ENCODE measurements at regions of chr7 and their contacts with region 1.

Region 1: GRCh38 chr7:74012842-74013249 is 15.1 kb upstream of the ELN start:
- DNase-seq: no peak
- H3K4me3 ChIP-seq: no peak overlapping the region
- H3K27ac ChIP-seq: no peak overlapping the region
- H3K4me1 ChIP-seq: peaks cover 0 to 10% (median 3%) of the 10 kb centered on the region in 4 donors
- H3K27me3 ChIP-seq: no peaks in the 10 kb centered on the region
- CTCF ChIP-seq: no peak
- EP300 ChIP-seq: no peak
- POLR2A ChIP-seq: no peak

Region 2: DNA sequence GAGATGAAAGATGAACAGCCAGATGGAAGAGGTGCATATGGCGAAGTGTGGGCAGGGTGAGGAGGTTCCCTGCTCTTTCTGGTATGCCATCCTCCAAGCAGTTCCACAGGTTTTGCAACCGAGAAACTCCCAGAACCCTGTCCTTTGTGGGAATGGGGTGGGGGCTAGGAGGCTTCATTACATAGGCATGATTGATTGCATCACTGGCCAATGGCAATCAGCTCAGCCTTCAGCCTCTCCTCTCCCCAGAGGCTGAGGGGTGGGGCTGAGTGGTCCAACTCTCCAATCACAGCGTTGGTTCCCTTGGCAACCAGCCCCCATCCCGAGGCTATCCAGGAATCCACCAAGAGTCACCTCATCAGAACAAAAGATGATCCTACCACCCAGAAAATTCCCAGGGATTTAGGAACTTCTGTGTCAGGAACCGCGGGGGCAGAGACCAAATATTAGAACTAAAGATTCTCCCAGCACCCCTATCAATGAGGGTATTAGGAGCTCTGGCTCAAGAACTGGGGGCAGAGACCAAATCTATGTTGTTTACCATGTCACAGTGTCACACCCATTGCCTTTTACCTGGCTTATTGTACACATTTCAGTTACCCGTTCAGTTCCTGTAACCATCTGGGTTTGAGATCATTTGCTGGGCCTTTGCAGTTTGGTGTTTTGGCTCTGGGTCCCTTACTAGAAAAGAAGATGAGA is 220.1 kb before region 1 on chr7:
- in situ Hi-C with region 1: no loop called
- intact Hi-C with region 1: no loop called
- DNase-seq: peak; percentile 68
- H3K4me3 ChIP-seq: no peak overlapping the region
- H3K27ac ChIP-seq: peak overlapping the region; percentile 86 to 90 (median 88)
- H3K4me1 ChIP-seq: peaks cover 5 to 43% (median 24%) of the 10 kb centered on the region in 4 donors
- H3K27me3 ChIP-seq: no peaks in the 10 kb centered on the region
- CTCF ChIP-seq: no peak
- EP300 ChIP-seq: no peak
- POLR2A ChIP-seq: no peak

Region 3: GRCh38 chr7:73894733-73895551 is 117.9 kb before region 1 on chr7:
- in situ Hi-C with region 1: loop called in 1 of 4 experiments (anchors 25 kb)
- intact Hi-C with region 1: no loop called
- DNase-seq: peak; percentile 47
- H3K4me3 ChIP-seq: no peak overlapping the region
- H3K27ac ChIP-seq: peak overlapping the region; percentile 31 to 77 (median 56)
- H3K4me1 ChIP-seq: peaks cover 3 to 28% (median 11%) of the 10 kb centered on the region in 4 donors
- H3K27me3 ChIP-seq: no peaks in the 10 kb centered on the region
- CTCF ChIP-seq: no peak
- EP300 ChIP-seq: no peak
- POLR2A ChIP-seq: no peak